HCT116 (cell line): ENCODE measurements at regions of chr1 and their contacts with region 1.

Region 1: GRCh38 chr1:179882243-179883039 is at the start of gene TOR1AIP1:
- DNase-seq: peak; percentile 94
- ATAC-seq: peak; percentile 83
- H3K4me3 ChIP-seq: peak within 1 kb of the TSS; percentile 82 to 92
- H3K27ac ChIP-seq: peak within 1 kb of the TSS; percentile 99
- H3K4me1 ChIP-seq: peaks cover 4 to 21% of the 10 kb centered on the region in 2 experiments; a peak in 3 of 4 replicates
- H3K27me3 ChIP-seq: no peaks in the 10 kb centered on the region
- CTCF ChIP-seq: peak in 1 of 3 experiments; percentile 21; a peak in 1 of 6 replicates
- POLR2A ChIP-seq: no peak
- RAD21 ChIP-seq: no peak; the same call in 1 of the 2 replicates
- total RNA-seq, gene TOR1AIP1: 30.5 TPM

Region 2: GRCh38 chr1:179954493-179955297 is 72.3 kb after region 1 on chr1 and contains the start of gene CEP350:
- CTCF ChIA-PET with region 1: no interaction called
- POLR2A ChIA-PET with region 1: no interaction called
- RAD21 ChIA-PET with region 1: no interaction called
- intact Hi-C with region 1: loop called (anchors 2 kb)
- DNase-seq: peak; percentile 98
- ATAC-seq: peak; percentile 98
- H3K4me3 ChIP-seq: peak within 1 kb of the TSS; percentile 53 to 89
- H3K27ac ChIP-seq: peak within 1 kb of the TSS; percentile 79
- H3K4me1 ChIP-seq: peaks cover 8 to 20% of the 10 kb centered on the region in 2 experiments; a peak in 3 of 4 replicates
- H3K27me3 ChIP-seq: no peaks in the 10 kb centered on the region
- CTCF ChIP-seq: no peak
- POLR2A ChIP-seq: peak; percentile 11
- RAD21 ChIP-seq: no peak
- total RNA-seq, gene CEP350: 27.6 TPM

Region 3: DNA sequence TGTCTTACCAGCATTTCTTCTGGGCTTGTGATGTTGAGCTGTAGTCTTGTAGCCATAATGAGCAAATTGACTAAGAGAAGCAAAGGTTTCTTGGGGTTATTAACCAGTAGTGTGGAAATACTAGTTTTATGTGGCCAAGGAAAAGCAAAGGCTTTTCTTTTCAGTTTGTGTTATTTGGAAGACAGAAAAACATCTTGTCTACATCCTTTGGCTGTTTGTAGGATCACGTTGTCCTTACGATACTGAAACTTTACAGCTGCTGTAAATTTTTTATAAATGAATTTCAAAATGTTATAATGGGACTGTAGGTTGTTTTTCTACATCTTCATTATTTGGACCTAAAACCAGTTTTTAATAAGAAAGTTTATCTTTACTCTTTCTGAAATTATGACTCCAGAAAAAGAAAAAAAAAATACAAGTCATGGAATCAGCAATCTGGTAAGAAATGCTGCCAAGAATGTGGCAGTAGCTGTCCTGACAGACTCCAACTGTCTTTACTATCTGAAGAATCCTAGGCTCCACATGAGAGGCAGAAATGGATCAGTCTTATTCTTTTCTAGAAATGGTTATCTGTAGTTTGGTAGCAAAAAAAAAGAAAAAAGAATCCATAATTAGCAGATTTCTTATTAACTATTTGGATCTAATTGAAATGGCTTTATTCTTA is 230.7 kb after region 1 on chr1:
- CTCF ChIA-PET with region 1: no interaction called
- POLR2A ChIA-PET with region 1: no interaction called
- RAD21 ChIA-PET with region 1: no interaction called
- intact Hi-C with region 1: no loop called
- DNase-seq: no peak
- ATAC-seq: no peak
- H3K4me3 ChIP-seq: no peak overlapping the region
- H3K27ac ChIP-seq: no peak overlapping the region
- H3K4me1 ChIP-seq: peaks cover 0 to 15% of the 10 kb centered on the region in 2 experiments; a peak in 2 of 4 replicates
- H3K27me3 ChIP-seq: no peaks in the 10 kb centered on the region
- CTCF ChIP-seq: no peak
- POLR2A ChIP-seq: no peak
- RAD21 ChIP-seq: no peak

Region 4: GRCh38 chr1:180154325-180155181 is 272.1 kb after region 1 on chr1 and contains the start of gene QSOX1:
- CTCF ChIA-PET with region 1: no interaction called
- POLR2A ChIA-PET with region 1: no interaction called
- RAD21 ChIA-PET with region 1: no interaction called
- intact Hi-C with region 1: loop called (anchors 2 kb)
- DNase-seq: peak; percentile 61
- ATAC-seq: peak; percentile 91
- H3K4me3 ChIP-seq: peak within 1 kb of the TSS; percentile 81 to 91
- H3K27ac ChIP-seq: peak within 1 kb of the TSS; percentile 78
- H3K4me1 ChIP-seq: peaks cover 2 to 43% of the 10 kb centered on the region in 2 experiments; a peak in 3 of 4 replicates
- H3K27me3 ChIP-seq: no peaks in the 10 kb centered on the region
- CTCF ChIP-seq: no peak
- POLR2A ChIP-seq: peak; percentile 69
- RAD21 ChIP-seq: 0 out of 2 replicates have a peak, but pooled peaks have one; percentile 17
- total RNA-seq, gene QSOX1: 89.2 TPM